CD8-positive, alpha-beta memory T cell (primary cell): ENCODE measurements at regions of chr3 and their contacts with region 1.

Region 1: GRCh38 chr3:33131331-33132018 is 17.7 kb downstream of the CRTAP start:
- DNase-seq: peak in 2 of 5 donors; percentile 19 to 22
- H3K4me3 ChIP-seq: no peak overlapping the region
- H3K4me3 Mint-ChIP-seq: no peak overlapping the region
- H3K27ac ChIP-seq: no peak overlapping the region
- H3K27ac Mint-ChIP-seq: peak overlapping the region in 2 of 8 donors; percentile 10 to 15
- H3K4me1 ChIP-seq: no peaks in the 10 kb centered on the region
- H3K4me1 Mint-ChIP-seq: peaks cover 2 to 6% (median 5%) of the 10 kb centered on the region in 3 donors
- H3K27me3 ChIP-seq: no peaks in the 10 kb centered on the region
- H3K27me3 Mint-ChIP-seq: peaks cover 0 to 1% of the 10 kb centered on the region in 2 donors

Region 2: GRCh38 chr3:33041909-33042308 is 89.6 kb before region 1 on chr3:
- CTCF ChIA-PET with region 1: no interaction called
- POLR2A ChIA-PET with region 1: no interaction called
- DNase-seq: no peak
- H3K4me3 ChIP-seq: no peak overlapping the region
- H3K4me3 Mint-ChIP-seq: peak overlapping the region in 1 of 7 donors; percentile 44
- H3K27ac ChIP-seq: no peak overlapping the region
- H3K27ac Mint-ChIP-seq: peak overlapping the region in 4 of 8 donors; percentile 10 to 81 (median 50)
- H3K4me1 ChIP-seq: peaks cover 38% of the 10 kb centered on the region
- H3K4me1 Mint-ChIP-seq: peaks cover 48 to 67% (median 65%) of the 10 kb centered on the region in 3 donors
- H3K27me3 ChIP-seq: no peaks in the 10 kb centered on the region
- H3K27me3 Mint-ChIP-seq: peaks cover 0 to 2% of the 10 kb centered on the region in 2 donors

Region 3: DNA sequence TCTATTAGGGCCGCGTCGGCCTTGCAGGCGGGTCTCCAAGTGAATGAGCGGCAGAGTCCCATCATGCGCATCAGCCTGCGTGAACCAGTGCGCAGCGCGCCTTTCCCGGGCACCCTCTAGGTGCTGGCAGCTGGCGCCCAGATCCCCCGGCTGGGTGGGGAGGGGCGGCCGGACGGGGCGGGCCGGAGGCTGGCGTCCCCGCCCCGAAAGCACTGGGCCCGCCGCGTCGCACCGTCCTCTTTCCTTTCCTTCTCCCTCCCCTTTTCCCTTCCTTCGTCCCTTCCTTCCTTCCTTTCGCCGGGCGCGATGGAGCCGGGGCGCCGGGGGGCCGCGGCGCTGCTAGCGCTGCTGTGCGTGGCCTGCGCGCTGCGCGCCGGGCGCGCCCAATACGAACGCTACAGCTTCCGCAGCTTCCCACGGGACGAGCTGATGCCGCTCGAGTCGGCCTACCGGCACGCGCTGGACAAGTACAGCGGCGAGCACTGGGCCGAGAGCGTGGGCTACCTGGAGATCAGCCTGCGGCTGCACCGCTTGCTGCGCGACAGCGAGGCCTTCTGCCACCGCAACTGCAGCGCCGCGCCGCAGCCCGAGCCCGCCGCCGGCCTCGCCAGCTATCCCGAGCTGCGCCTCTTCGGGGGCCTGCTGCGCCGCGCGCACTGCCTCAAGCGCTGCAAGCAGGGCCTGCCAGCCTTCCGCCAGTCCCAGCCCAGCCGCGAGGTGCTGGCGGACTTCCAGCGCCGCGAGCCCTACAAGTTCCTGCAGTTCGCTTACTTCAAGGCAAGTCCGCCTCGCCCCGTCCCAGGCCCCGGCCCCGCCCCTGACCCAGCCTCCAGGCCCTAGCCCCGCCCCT is 17.5 kb before region 1 on chr3 and contains the start of gene CRTAP:
- CTCF ChIA-PET with region 1: interaction called, 31 read pairs
- POLR2A ChIA-PET with region 1: no interaction called
- DNase-seq: peak; percentile 78 to 93 (median 83)
- H3K4me3 ChIP-seq: peak within 1 kb of the TSS; percentile 85
- H3K4me3 Mint-ChIP-seq: peak within 1 kb of the TSS; percentile 86 to 95 (median 87)
- H3K27ac ChIP-seq: peak within 1 kb of the TSS; percentile 82
- H3K27ac Mint-ChIP-seq: peak within 1 kb of the TSS; percentile 73 to 90 (median 84)
- H3K4me1 ChIP-seq: peaks cover 19% of the 10 kb centered on the region
- H3K4me1 Mint-ChIP-seq: peaks cover 47 to 74% (median 58%) of the 10 kb centered on the region in 3 donors
- H3K27me3 ChIP-seq: no peaks in the 10 kb centered on the region
- H3K27me3 Mint-ChIP-seq: peaks cover 0 to 3% of the 10 kb centered on the region in 2 donors
- total RNA-seq, gene CRTAP: 49.5 to 50.3 TPM

Region 4: DNA sequence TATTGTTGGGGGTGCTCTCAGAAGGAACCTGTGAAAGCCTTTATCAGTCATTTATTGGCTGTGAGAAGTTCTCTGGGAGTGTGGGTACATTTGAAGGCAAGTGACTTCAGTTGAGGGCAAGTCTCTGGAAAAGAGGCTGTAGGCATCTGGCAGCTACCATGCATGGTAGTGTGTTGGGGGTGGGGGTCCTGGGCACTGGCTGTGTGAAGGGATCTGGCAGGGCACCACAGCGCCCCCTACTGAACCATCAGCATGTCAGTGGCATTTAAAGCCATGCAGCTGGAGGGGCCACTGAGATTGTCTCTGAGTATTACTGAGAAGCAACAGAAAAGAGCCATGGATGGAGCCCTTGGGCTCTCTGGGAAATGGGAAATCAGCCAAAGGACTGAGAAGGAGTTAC is 13.0 kb after region 1 on chr3:
- CTCF ChIA-PET with region 1: interaction called, 13 read pairs
- POLR2A ChIA-PET with region 1: no interaction called
- DNase-seq: peak in 1 of 5 donors; percentile 8
- H3K4me3 ChIP-seq: no peak overlapping the region
- H3K4me3 Mint-ChIP-seq: no peak overlapping the region
- H3K27ac ChIP-seq: no peak overlapping the region
- H3K27ac Mint-ChIP-seq: peak overlapping the region in 3 of 8 donors; percentile 7 to 68 (median 12)
- H3K4me1 ChIP-seq: no peaks in the 10 kb centered on the region
- H3K4me1 Mint-ChIP-seq: peaks cover 0 to 8% (median 5%) of the 10 kb centered on the region in 3 donors
- H3K27me3 ChIP-seq: no peaks in the 10 kb centered on the region
- H3K27me3 Mint-ChIP-seq: no peaks in the 10 kb centered on the region

Region 5: DNA sequence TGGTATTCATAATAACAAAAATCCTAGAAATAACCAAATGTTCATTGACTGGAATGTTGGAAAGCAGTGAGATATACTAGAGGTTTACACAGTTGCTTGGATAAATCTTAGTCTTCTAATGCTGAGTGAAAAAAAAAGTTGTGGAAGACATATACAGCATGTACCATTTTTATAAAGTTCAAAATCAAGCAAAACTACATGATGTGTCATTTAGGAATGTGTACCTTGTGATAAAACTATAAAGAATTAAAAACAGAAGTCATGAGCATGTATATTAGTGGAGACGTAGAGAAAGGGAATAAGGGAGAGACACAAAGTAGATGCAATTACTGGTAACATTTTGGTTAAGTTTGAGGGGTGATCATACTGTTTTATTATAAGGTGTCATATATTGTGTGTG is 190.9 kb after region 1 on chr3:
- CTCF ChIA-PET with region 1: no interaction called
- POLR2A ChIA-PET with region 1: no interaction called
- DNase-seq: no peak
- H3K4me3 ChIP-seq: no peak overlapping the region
- H3K4me3 Mint-ChIP-seq: no peak overlapping the region
- H3K27ac ChIP-seq: no peak overlapping the region
- H3K27ac Mint-ChIP-seq: no peak overlapping the region
- H3K4me1 ChIP-seq: no peaks in the 10 kb centered on the region
- H3K4me1 Mint-ChIP-seq: peaks cover 0 to 7% (median 2%) of the 10 kb centered on the region in 3 donors
- H3K27me3 ChIP-seq: no peaks in the 10 kb centered on the region
- H3K27me3 Mint-ChIP-seq: peaks cover 8 to 54% of the 10 kb centered on the region in 2 donors

Region 6: DNA sequence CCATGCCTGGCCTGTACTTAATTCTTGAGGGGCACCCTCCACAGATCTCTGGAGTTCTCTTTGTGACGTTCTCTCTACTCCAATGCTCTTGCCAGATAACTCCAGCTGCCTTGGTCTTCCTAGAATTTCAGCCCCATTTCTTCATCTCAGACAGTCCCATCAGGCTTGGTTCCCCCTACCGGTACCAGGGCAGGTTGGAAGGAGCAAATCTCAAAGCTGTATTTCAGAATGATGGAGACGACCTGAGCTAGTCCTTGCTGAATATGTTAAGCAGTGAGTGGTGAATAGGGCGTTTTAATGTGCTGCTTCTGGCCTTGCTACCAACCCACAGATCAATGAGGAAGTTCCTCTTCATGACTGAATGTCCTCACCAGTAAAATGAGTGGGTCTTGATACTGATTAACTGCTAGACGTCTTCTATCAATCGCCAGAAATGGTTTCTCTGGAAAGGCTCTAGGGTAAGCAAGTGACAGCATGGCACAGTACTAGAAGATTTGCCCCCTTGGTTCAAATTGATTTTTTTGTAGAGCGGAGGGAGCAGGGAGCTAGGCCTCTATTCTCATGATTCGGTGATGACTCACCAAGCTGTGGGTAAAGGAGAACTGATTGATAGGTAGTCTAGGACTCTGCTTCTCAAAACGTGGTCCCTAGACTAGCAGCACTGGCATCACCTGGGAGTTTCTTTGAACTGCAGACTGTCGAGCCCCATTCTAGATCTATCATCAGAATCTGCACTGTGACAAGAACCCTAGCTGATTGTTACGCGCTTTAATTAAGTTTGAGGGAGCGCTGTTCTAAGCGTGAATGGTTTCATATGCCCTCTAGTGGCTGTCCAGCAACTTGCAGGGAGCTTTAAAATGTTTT is 241.0 kb after region 1 on chr3:
- CTCF ChIA-PET with region 1: interaction called, 12 read pairs
- POLR2A ChIA-PET with region 1: interaction called, 3 read pairs
- DNase-seq: peak; percentile 8 to 56 (median 16)
- H3K4me3 ChIP-seq: no peak overlapping the region
- H3K4me3 Mint-ChIP-seq: no peak overlapping the region
- H3K27ac ChIP-seq: no peak overlapping the region
- H3K27ac Mint-ChIP-seq: no peak overlapping the region
- H3K4me1 ChIP-seq: no peaks in the 10 kb centered on the region
- H3K4me1 Mint-ChIP-seq: peaks cover 0 to 7% (median 7%) of the 10 kb centered on the region in 3 donors
- H3K27me3 ChIP-seq: no peaks in the 10 kb centered on the region
- H3K27me3 Mint-ChIP-seq: peaks cover 10 to 25% of the 10 kb centered on the region in 2 donors

Region 7: DNA sequence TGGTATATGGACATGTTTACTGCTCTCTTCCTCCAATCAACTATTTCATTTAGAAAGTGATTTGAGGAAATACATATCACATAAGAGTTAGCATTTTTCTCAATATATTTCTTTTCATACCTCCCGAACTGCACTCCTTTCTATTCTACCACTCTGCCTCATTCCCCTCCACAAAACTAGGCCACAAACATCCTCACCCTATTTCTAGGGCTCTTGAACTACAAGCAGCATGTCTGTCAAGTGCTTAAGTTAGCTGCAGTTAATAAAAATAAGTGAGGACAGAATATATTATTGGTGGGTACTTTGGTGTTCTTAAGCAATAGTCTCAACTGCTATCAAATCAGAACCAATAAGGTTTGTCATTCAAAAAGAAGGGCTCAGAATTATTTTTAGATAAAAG is 461.5 kb after region 1 on chr3:
- CTCF ChIA-PET with region 1: no interaction called
- POLR2A ChIA-PET with region 1: no interaction called
- DNase-seq: no peak
- H3K4me3 ChIP-seq: no peak overlapping the region
- H3K4me3 Mint-ChIP-seq: no peak overlapping the region
- H3K27ac ChIP-seq: no peak overlapping the region
- H3K27ac Mint-ChIP-seq: peak overlapping the region in 3 of 8 donors; percentile 5 to 83 (median 48)
- H3K4me1 ChIP-seq: no peaks in the 10 kb centered on the region
- H3K4me1 Mint-ChIP-seq: no peaks in the 10 kb centered on the region
- H3K27me3 ChIP-seq: no peaks in the 10 kb centered on the region
- H3K27me3 Mint-ChIP-seq: no peaks in the 10 kb centered on the region

Region 8: DNA sequence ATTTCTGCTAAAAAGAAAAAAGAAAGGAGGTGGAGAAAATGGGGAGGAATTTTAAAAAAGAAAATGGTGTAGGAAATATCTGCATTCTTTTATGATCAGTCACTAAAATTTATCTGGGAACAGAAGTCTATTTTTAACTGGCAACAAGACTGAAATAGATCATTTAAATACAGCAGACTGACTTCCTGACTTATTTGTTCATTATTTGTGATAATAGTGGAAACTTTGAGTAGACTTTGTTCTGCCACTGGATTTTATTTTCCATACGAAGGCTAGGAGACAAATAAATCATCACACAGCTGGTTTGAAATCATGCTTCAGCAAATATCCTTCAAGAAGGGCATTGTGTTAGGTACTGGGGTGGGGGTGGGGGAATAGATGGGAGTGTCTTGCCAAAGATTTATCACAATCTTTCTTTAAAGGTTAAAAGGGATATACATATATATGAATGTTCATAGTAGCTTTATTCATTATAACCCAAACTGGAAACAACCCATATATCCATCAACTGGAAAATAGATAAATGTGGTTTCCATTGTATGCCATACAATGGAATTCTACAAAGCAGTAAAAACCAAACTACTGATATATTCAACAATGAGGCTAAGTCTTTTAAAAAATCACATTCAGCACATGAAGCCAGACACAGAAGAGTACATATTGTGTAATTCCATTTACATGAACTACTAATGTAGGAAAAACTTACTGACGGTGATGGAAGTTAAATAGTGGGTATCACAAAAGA is 591.3 kb after region 1 on chr3:
- CTCF ChIA-PET with region 1: no interaction called
- POLR2A ChIA-PET with region 1: no interaction called
- DNase-seq: no peak
- H3K4me3 ChIP-seq: no peak overlapping the region
- H3K4me3 Mint-ChIP-seq: no peak overlapping the region
- H3K27ac ChIP-seq: no peak overlapping the region
- H3K27ac Mint-ChIP-seq: no peak overlapping the region
- H3K4me1 ChIP-seq: peaks cover 10% of the 10 kb centered on the region
- H3K4me1 Mint-ChIP-seq: peaks cover 6 to 14% (median 9%) of the 10 kb centered on the region in 3 donors
- H3K27me3 ChIP-seq: no peaks in the 10 kb centered on the region
- H3K27me3 Mint-ChIP-seq: peaks cover 0 to 14% of the 10 kb centered on the region in 2 donors

Region 9: DNA sequence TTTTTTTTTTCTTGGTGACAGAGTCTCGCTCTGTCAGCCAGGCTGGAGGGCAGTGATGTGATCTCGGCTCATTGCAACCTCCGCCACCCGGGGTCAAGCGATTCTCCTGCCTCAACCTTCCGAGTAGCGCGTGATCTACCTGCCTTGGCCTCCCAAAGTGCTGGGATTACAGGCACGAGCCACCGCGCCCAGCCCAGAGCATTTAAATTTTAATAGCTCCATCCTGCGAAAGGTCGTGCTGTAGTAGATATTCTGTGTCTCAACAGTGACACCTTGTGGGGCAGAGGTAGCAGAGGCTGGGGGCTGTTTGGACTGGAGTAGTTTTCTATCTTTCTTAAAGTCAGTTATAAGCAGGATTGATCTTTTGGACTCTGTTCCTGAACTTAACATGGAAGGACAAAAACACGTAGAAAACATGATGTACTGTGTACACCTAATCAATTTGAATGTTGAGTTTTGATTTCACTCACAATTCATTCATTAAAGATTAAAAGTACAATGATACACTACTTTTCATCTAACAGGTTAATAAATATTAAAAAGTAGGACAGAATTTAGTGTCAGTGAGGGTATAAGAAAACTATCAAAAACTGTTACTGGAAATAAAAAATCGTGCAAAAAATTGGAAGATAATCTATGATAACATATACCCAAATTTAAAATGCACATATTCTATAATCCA is 656.0 kb after region 1 on chr3:
- CTCF ChIA-PET with region 1: interaction called, 15 read pairs
- POLR2A ChIA-PET with region 1: no interaction called
- DNase-seq: peak; percentile 29 to 72 (median 49)
- H3K4me3 ChIP-seq: no peak overlapping the region
- H3K4me3 Mint-ChIP-seq: peak overlapping the region in 3 of 7 donors; percentile 6 to 41 (median 36)
- H3K27ac ChIP-seq: no peak overlapping the region
- H3K27ac Mint-ChIP-seq: no peak overlapping the region
- H3K4me1 ChIP-seq: no peaks in the 10 kb centered on the region
- H3K4me1 Mint-ChIP-seq: peaks cover 3 to 5% (median 3%) of the 10 kb centered on the region in 3 donors
- H3K27me3 ChIP-seq: no peaks in the 10 kb centered on the region
- H3K27me3 Mint-ChIP-seq: peaks cover 3 to 26% of the 10 kb centered on the region in 2 donors